GM12878 (cell line): ENCODE measurements at regions of chr2 and their contacts with region 1.

Region 1: DNA sequence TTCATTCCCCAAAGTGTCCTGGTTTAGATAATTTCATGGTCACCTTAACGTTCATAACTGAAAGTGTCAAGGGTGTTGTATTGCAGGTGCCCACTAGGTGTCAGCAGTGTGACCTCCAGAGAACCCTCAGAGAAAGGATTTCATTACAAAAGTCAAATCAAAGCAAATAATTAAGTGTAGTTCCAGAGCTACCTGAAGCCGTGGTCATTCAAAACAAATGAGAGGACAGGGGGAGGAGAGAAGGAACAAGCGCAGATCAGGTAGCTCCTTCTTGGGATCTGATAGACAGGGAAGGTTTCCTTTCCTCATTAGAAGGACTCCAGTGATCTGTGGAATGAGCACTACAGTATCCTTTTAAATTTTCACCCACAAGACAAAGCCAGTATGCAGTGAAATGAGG is at the start of gene SLC9A4:
- DNase-seq: no peak
- ATAC-seq: peak; percentile 77
- H3K4me3 ChIP-seq: no peak within 1 kb of the TSS
- H3K27ac ChIP-seq: no peak within 1 kb of the TSS
- H3K4me1 ChIP-seq: no peaks in the 10 kb centered on the region
- H3K27me3 ChIP-seq: peaks cover 0 to 2% of the 10 kb centered on the region in 2 experiments; a peak in 1 of 4 replicates
- CTCF ChIP-seq: peak; percentile 78 to 89 (median 88)
- EP300 ChIP-seq: no peak
- POLR2A ChIP-seq: no peak
- RAD21 ChIP-seq: peak; percentile 70
- polyA plus RNA-seq, gene SLC9A4: not detected

Region 2: GRCh38 chr2:101419096-101419663 is 1053.8 kb before region 1 on chr2:
- CTCF ChIA-PET with region 1: no interaction called
- POLR2A ChIA-PET with region 1: no interaction called
- RAD21 ChIA-PET with region 1: no interaction called
- SMC1A ChIA-PET with region 1: no interaction called
- in situ Hi-C with region 1: loop called (anchors 25 kb)
- intact Hi-C with region 1: no loop called
- DNase-seq: no peak
- ATAC-seq: peak; percentile 94
- H3K4me3 ChIP-seq: no peak overlapping the region
- H3K27ac ChIP-seq: no peak overlapping the region
- H3K4me1 ChIP-seq: no peaks in the 10 kb centered on the region
- H3K27me3 ChIP-seq: no peaks in the 10 kb centered on the region; a peak in 2 of 4 replicates
- CTCF ChIP-seq: peak; percentile 65 to 70 (median 65)
- EP300 ChIP-seq: no peak
- POLR2A ChIP-seq: no peak
- RAD21 ChIP-seq: peak; percentile 81

Region 3: DNA sequence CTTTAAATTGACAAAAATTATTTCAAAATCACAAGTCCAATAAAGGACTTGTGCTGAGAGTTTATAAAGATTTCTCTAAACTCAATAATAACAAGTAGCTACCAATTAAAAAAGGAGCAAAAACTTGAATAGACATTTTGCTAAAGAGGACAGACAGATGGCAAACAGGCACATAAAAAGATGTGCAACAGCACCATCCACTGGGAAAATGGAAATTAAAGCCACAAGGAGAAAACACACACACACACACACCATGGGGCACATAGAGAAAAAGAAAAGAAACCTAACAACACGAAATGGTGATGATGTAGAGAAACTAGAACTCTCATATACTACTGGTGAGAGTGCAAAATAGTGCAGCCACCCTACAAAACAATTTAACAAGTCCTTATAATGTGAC is 12.6 kb before region 1 on chr2:
- CTCF ChIA-PET with region 1: interaction called, 38 read pairs
- POLR2A ChIA-PET with region 1: no interaction called
- RAD21 ChIA-PET with region 1: no interaction called
- SMC1A ChIA-PET with region 1: no interaction called
- in situ Hi-C with region 1: no loop called
- intact Hi-C with region 1: no loop called
- DNase-seq: no peak
- ATAC-seq: no peak
- H3K4me3 ChIP-seq: no peak overlapping the region
- H3K27ac ChIP-seq: no peak overlapping the region
- H3K4me1 ChIP-seq: no peaks in the 10 kb centered on the region
- H3K27me3 ChIP-seq: no peaks in the 10 kb centered on the region; a peak in 1 of 4 replicates
- CTCF ChIP-seq: no peak; a peak in 1 of 6 replicates
- EP300 ChIP-seq: no peak
- POLR2A ChIP-seq: no peak
- RAD21 ChIP-seq: no peak

Region 4: GRCh38 chr2:102498414-102498813 is 25.4 kb after region 1 on chr2:
- CTCF ChIA-PET with region 1: interaction called, 10 read pairs
- POLR2A ChIA-PET with region 1: no interaction called
- RAD21 ChIA-PET with region 1: no interaction called
- SMC1A ChIA-PET with region 1: no interaction called
- in situ Hi-C with region 1: no loop called
- intact Hi-C with region 1: no loop called
- DNase-seq: no peak
- ATAC-seq: peak; percentile 32; the same call in 1 of the 3 replicates
- H3K4me3 ChIP-seq: no peak overlapping the region
- H3K27ac ChIP-seq: no peak overlapping the region
- H3K4me1 ChIP-seq: no peaks in the 10 kb centered on the region
- H3K27me3 ChIP-seq: no peaks in the 10 kb centered on the region; a peak in 1 of 4 replicates
- CTCF ChIP-seq: no peak
- EP300 ChIP-seq: no peak
- POLR2A ChIP-seq: no peak
- RAD21 ChIP-seq: no peak

Region 5: GRCh38 chr2:102615622-102616436 is 142.8 kb after region 1 on chr2:
- CTCF ChIA-PET with region 1: interaction called, 22 read pairs
- POLR2A ChIA-PET with region 1: no interaction called
- RAD21 ChIA-PET with region 1: interaction called, 8 read pairs
- SMC1A ChIA-PET with region 1: interaction called, 13 read pairs
- in situ Hi-C with region 1: loop called (anchors 10 kb)
- intact Hi-C with region 1: loop called (anchors 1 kb)
- DNase-seq: no peak
- ATAC-seq: peak; percentile 91
- H3K4me3 ChIP-seq: no peak overlapping the region
- H3K27ac ChIP-seq: no peak overlapping the region
- H3K4me1 ChIP-seq: no peaks in the 10 kb centered on the region
- H3K27me3 ChIP-seq: peaks cover 6 to 12% of the 10 kb centered on the region in 2 experiments
- CTCF ChIP-seq: peak; percentile 91 to 95 (median 93)
- EP300 ChIP-seq: no peak
- POLR2A ChIP-seq: no peak
- RAD21 ChIP-seq: peak; percentile 72

Region 6: DNA sequence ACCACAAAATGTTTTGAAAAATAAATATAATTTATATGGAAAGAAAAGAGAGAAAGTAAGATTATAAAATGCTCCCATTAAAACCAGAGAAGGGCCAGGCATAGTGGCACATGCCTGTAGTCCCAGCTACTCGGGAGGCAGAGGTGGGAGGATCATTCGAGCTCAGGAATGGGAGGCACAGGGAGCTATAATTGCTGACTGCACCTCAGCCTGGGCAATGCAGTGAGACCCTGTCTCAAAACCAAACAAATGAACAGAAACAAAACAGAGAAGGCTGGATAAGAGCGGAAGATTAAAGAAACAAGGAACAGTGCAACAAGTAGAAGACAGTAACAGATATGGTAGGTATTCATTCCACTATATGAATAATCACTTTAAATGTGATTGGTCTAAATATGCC is 270.2 kb after region 1 on chr2:
- CTCF ChIA-PET with region 1: no interaction called
- POLR2A ChIA-PET with region 1: no interaction called
- RAD21 ChIA-PET with region 1: no interaction called
- SMC1A ChIA-PET with region 1: no interaction called
- in situ Hi-C with region 1: no loop called
- intact Hi-C with region 1: no loop called
- DNase-seq: no peak
- ATAC-seq: no peak
- H3K4me3 ChIP-seq: no peak overlapping the region
- H3K27ac ChIP-seq: no peak overlapping the region
- H3K4me1 ChIP-seq: no peaks in the 10 kb centered on the region
- H3K27me3 ChIP-seq: no peaks in the 10 kb centered on the region
- CTCF ChIP-seq: no peak
- EP300 ChIP-seq: no peak
- POLR2A ChIP-seq: no peak
- RAD21 ChIP-seq: no peak

Region 7: DNA sequence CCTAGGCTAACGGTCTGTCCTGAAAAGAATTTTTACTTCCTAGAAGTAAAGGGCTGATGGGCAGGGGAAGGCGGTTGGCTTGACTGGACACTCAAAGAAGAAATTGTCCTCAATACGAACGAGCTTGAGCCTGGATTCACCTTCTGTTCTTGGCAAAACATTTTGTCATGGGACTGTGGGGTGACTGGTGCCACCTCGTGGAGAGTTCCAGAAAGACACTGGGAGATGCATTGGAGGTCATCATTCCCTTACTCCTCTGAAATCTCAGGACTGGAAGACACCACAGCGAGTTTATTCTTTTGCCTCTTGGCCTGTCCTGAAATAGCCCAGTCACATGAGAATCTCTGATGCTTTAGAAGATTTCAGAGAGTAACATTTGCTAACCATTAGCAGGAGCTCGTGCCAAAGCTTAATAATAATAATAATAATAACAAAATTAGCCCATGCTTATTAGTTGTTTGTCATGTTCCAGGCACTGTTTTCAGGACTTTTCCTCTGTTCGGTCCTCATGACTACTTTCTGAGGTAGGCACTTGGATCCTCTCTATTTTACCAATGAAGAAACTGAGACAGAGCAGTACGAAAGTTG is 333.3 kb after region 1 on chr2:
- CTCF ChIA-PET with region 1: interaction called, 8 read pairs
- POLR2A ChIA-PET with region 1: no interaction called
- RAD21 ChIA-PET with region 1: no interaction called
- SMC1A ChIA-PET with region 1: interaction called, 4 read pairs
- in situ Hi-C with region 1: no loop called
- intact Hi-C with region 1: loop called (anchors 1 kb)
- DNase-seq: no peak
- ATAC-seq: peak; percentile 83
- H3K4me3 ChIP-seq: no peak overlapping the region
- H3K27ac ChIP-seq: no peak overlapping the region
- H3K4me1 ChIP-seq: peaks cover 3% of the 10 kb centered on the region
- H3K27me3 ChIP-seq: no peaks in the 10 kb centered on the region
- CTCF ChIP-seq: peak; percentile 85 to 90 (median 86)
- EP300 ChIP-seq: no peak
- POLR2A ChIP-seq: no peak
- RAD21 ChIP-seq: peak; percentile 77

Region 8: GRCh38 chr2:102850888-102851287 is 377.9 kb after region 1 on chr2:
- CTCF ChIA-PET with region 1: no interaction called
- POLR2A ChIA-PET with region 1: no interaction called
- RAD21 ChIA-PET with region 1: no interaction called
- SMC1A ChIA-PET with region 1: no interaction called
- in situ Hi-C with region 1: no loop called
- intact Hi-C with region 1: no loop called
- DNase-seq: no peak
- ATAC-seq: no peak
- H3K4me3 ChIP-seq: no peak overlapping the region
- H3K27ac ChIP-seq: no peak overlapping the region
- H3K4me1 ChIP-seq: no peaks in the 10 kb centered on the region
- H3K27me3 ChIP-seq: peaks cover 0 to 1% of the 10 kb centered on the region in 2 experiments; a peak in 2 of 4 replicates
- CTCF ChIP-seq: no peak
- EP300 ChIP-seq: no peak
- POLR2A ChIP-seq: no peak
- RAD21 ChIP-seq: no peak